ENCODE measurements at regions of chr4 and their contacts with region 1.

Region 1: GRCh38 chr4:110516106-110516922 is 40.4 kb downstream of the ENPEP start:
- DNase-seq: peak; percentile 50
- ATAC-seq: peak; percentile 83

Region 2: DNA sequence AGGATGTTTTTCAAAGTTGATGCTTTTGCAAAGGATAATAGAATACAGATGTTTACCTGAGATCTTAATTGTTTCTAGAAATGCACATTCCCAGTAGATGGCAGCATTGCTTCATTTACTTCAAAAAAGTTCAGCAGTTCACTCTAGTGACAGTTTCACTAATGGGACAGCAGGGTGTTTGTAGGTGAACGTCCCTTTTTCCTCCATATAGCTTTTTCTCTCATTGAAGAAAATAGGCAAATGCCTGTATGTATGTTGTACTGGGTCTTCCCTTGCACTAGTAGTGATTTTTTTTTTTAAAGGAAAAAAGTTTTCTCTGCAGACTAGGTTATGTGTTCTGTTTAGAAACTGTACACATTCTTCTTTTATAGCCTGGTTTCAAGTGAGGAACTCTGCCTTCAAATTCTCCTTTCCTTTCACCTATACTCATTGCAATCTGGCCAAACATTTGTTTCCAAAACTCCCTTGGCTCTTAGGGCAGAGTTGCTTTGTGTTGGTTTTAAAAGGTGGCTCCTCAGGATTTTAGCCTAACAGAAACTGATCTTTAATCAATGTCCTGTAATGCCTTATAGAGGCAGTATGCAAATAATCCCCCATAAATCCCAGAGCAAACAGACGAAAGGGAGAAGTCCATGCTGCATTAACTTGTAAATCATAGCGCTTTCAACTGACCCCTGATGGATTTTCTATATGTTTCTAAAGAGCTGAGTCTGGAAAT is 517.3 kb before region 1 on chr4:
- intact Hi-C with region 1: loop called (anchors 2 kb)
- DNase-seq: no peak
- ATAC-seq: peak; percentile 58

Region 3: GRCh38 chr4:110310795-110311194 is 205.5 kb before region 1 on chr4:
- intact Hi-C with region 1: loop called (anchors 10 kb)
- DNase-seq: no peak
- ATAC-seq: no peak

Region 4: GRCh38 chr4:110735686-110736085 is 219.4 kb after region 1 on chr4:
- intact Hi-C with region 1: no loop called
- DNase-seq: peak; percentile 21
- ATAC-seq: no peak